ENCODE measurements at regions of chr20 and their contacts with region 1.

Region 1: DNA sequence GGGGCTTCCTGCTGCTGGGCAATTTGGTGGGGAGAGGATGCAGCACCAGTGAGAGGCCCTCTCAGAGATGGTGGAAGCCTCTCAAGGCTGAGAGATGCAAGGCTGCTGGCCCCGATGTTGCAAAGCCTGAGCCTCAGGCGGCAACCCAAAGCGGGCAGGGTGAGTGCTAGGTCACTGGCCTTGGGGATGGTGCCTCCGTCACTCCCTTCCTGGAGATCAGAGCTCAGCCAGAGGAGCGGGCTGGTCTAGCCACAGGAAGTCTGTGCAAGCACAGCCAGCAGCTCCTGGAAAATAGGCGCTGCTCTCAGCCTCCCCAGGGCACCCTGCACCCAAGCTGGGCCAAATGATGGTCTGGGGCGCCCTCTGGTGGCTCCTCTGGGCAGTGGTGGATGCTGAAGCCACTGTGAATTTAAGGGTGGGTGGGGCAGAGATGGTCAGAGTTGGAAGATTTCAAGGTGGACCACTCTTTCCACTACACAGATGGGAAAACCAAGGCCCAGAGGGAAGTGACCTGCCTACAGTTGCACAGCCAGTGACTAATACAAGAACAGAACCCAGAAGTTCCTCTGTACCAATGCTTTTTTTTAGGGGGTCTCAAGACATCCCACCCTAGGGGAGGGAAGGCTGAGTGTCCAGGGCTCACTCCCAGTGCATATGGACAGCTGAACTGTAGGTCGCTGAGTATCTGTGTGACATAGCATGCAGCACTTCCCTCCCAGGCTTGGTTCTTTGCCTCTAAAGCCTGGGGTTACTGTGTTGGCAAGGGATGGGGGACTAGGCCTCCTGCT is 20.8 kb downstream of the C20orf203 start:
- DNase-seq: peak; percentile 76 to 85
- ATAC-seq: peak; percentile 96 to 98
- H3K4me3 ChIP-seq: no peak overlapping the region
- H3K27ac ChIP-seq: peak overlapping the region in 1 of 2 experiments; percentile 49; a peak in 1 of 6 replicates
- H3K4me1 ChIP-seq: no peaks in the 10 kb centered on the region
- CTCF ChIP-seq: peak; percentile 94
- EP300 ChIP-seq: no peak
- POLR2A ChIP-seq: no peak
- RAD21 ChIP-seq: peak; percentile 99 to 100

Region 2: GRCh38 chr20:32497589-32498224 is 155.2 kb before region 1 on chr20:
- CTCF ChIA-PET with region 1: interaction called, 13 read pairs
- POLR2A ChIA-PET with region 1: no interaction called
- DNase-seq: no peak
- ATAC-seq: no peak
- H3K4me3 ChIP-seq: no peak overlapping the region
- H3K27ac ChIP-seq: no peak overlapping the region
- H3K4me1 ChIP-seq: no peaks in the 10 kb centered on the region
- CTCF ChIP-seq: no peak
- EP300 ChIP-seq: no peak
- POLR2A ChIP-seq: no peak
- RAD21 ChIP-seq: no peak

Region 3: GRCh38 chr20:32558526-32558925 is 94.4 kb before region 1 on chr20:
- CTCF ChIA-PET with region 1: interaction called, 19 read pairs
- POLR2A ChIA-PET with region 1: no interaction called
- DNase-seq: no peak
- ATAC-seq: no peak
- H3K4me3 ChIP-seq: no peak overlapping the region
- H3K27ac ChIP-seq: no peak overlapping the region
- H3K4me1 ChIP-seq: peaks cover 14% of the 10 kb centered on the region
- CTCF ChIP-seq: no peak
- EP300 ChIP-seq: no peak
- POLR2A ChIP-seq: no peak
- RAD21 ChIP-seq: no peak

Region 4: DNA sequence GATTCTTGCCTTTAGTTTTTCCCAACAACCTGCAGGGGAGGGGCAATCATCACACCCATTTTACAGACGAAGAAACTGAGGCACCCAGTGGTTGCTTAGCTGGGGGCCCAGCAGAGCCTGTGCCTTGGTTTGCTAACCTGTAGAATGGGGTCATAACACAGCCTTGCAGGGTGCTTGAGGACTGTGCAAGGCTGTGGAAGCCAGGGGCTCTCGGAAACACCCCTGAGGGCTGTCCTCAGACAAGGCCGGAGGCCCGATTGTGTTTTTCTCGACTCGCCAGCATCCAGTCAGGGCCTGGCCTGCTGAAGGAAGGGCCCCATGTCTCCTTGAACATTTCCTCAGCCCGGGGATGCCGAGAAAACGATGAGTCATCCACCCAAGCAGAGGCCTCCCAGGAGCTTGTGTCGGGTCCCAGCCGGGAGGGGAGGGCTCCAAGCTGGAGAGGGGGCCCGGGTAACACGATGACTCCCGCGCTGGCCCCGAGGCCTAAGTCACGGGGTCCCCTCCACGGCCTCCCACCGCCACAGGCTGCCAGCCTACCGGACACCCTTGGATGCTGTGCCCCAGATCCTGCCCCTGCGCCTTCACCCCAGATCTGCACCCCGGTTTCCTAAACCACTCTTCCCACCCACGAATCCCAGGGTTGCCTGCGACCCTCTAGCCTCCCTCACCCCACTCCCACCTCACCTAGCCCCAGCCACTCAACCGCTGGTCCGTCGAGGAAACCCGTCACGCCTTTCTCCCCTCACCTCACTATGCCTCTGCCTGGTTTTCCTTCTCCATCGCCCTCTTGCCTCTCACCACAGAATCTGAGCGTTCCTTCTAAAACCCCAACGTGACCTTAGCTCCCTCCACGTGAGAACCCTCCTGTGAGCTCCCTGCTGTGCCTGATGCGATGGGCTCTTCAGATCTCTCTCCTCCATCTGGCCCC is 78.4 kb before region 1 on chr20:
- CTCF ChIA-PET with region 1: interaction called, 12 read pairs
- POLR2A ChIA-PET with region 1: no interaction called
- DNase-seq: peak; percentile 60 to 69
- ATAC-seq: peak; percentile 37 to 73; a peak in 4 of 6 replicates
- H3K4me3 ChIP-seq: no peak overlapping the region
- H3K27ac ChIP-seq: peak overlapping the region; percentile 65 to 84; a peak in 5 of 6 replicates
- H3K4me1 ChIP-seq: peaks cover 11% of the 10 kb centered on the region
- CTCF ChIP-seq: no peak
- EP300 ChIP-seq: no peak
- POLR2A ChIP-seq: no peak
- RAD21 ChIP-seq: no peak

Region 5: DNA sequence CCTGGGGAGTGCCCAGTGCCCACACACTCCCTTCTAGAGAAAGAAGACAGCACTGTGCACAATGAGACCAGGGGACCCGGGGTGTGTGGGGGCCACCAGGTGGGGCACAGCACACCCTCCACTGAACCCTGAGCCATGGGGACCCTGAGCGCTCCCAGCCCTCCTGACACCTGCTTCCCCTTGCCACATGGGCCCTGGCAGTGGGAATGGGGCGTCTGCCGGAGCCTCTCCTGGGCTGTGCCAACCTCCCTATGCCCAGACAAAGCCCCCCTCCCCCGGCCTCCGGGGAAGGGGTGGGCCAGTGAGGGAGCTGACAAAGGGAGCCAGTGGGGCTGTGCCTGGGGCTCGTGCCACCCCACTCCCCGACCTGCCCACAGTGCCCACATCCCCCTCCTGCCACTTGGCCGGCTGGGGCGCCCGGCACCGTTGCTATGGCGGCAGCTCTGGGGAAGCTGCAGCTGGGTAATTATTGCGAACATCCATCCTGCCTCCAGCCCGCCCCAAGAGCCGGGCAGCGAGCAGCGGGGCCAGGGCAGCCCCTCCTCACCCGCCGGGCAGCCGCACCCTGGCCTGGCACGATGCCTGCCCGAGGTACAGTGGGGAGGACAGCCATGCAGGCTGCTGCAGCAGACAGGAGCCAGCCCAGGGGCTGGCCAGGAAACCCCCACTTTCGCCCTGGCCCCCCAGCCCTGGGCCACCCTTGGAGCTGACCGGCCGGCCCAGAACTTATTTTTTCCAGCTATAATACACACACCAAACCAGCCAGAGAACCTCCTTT is 25.9 kb before region 1 on chr20:
- CTCF ChIA-PET with region 1: interaction called, 16 read pairs
- POLR2A ChIA-PET with region 1: no interaction called
- DNase-seq: no peak
- ATAC-seq: no peak; a peak in 1 of 6 replicates
- H3K4me3 ChIP-seq: no peak overlapping the region
- H3K27ac ChIP-seq: peak overlapping the region in 1 of 2 experiments; percentile 62; a peak in 3 of 6 replicates
- H3K4me1 ChIP-seq: peaks cover 14% of the 10 kb centered on the region
- CTCF ChIP-seq: no peak
- EP300 ChIP-seq: no peak
- POLR2A ChIP-seq: no peak
- RAD21 ChIP-seq: no peak

Region 6: GRCh38 chr20:32642257-32643046 is 10.5 kb before region 1 on chr20:
- CTCF ChIA-PET with region 1: interaction called, 20 read pairs
- POLR2A ChIA-PET with region 1: no interaction called
- DNase-seq: no peak
- ATAC-seq: no peak
- H3K4me3 ChIP-seq: no peak overlapping the region
- H3K27ac ChIP-seq: no peak overlapping the region
- H3K4me1 ChIP-seq: no peaks in the 10 kb centered on the region
- CTCF ChIP-seq: no peak
- EP300 ChIP-seq: no peak
- POLR2A ChIP-seq: no peak
- RAD21 ChIP-seq: no peak

Region 7: DNA sequence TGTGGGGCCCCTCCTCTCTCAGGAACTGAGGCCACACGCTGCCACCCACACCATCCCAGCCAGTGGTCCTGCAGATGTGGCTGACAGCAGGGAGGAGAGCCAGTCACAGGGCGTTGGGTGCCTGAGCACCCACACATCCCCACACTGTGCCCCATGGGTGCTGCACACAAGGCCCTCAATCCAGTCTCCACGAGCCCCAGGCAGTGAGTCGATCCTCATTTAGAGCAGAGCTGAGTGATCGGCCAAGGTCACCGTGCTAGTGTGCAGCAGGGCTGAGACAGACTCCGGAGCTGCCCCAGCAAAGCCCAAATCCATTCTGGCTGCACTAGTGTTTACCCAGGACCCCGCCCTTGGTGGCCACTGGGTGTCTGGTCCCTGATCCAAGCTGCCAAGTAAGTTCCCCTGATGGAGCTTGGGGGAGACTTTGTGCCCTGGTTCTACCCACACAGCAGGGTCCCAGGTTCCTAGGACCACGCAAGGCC is 11.8 kb after region 1 on chr20:
- CTCF ChIA-PET with region 1: interaction called, 21 read pairs
- POLR2A ChIA-PET with region 1: no interaction called
- DNase-seq: no peak
- ATAC-seq: peak; percentile 45 to 47
- H3K4me3 ChIP-seq: no peak overlapping the region
- H3K27ac ChIP-seq: peak overlapping the region; percentile 25 to 64; a peak in 4 of 6 replicates
- H3K4me1 ChIP-seq: peaks cover 13% of the 10 kb centered on the region
- CTCF ChIP-seq: no peak
- EP300 ChIP-seq: no peak
- POLR2A ChIP-seq: no peak
- RAD21 ChIP-seq: no peak